ENCODE measurements at regions of chr2 and their contacts with region 1.

Region 1: DNA sequence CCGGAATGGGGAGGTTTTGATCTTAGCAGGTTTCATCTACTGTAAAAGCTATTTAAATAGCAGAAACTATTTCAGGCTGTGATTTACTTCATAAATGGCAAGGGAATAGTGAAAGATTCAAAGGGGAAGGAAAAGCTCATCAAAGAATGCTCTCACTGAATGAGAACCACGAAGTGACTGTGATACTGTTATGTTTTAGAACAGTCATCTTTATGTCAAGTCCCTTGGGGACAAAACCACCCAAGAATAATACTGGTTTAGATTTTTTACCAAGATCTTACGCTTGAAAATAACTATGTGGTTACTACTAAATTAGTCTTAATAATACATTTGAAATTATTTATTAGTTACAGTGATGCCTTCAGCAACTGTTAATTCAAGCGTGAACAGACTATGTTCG is 28.1 kb downstream of the FARSB start:
- DNase-seq: no peak
- ATAC-seq: no peak
- H3K4me3 ChIP-seq: no peak overlapping the region
- H3K27ac ChIP-seq: no peak overlapping the region
- H3K4me1 ChIP-seq: no peaks in the 10 kb centered on the region
- H3K27me3 ChIP-seq: no peaks in the 10 kb centered on the region
- CTCF ChIP-seq: no peak
- EP300 ChIP-seq: no peak
- POLR2A ChIP-seq: no peak
- RAD21 ChIP-seq: no peak

Region 2: GRCh38 chr2:222604749-222605515 is 22.8 kb before region 1 on chr2:
- CTCF ChIA-PET with region 1: no interaction called
- POLR2A ChIA-PET with region 1: no interaction called
- in situ Hi-C with region 1: no loop called
- intact Hi-C with region 1: loop called (anchors 1 kb)
- DNase-seq: no peak
- ATAC-seq: no peak
- H3K4me3 ChIP-seq: no peak overlapping the region
- H3K27ac ChIP-seq: no peak overlapping the region
- H3K4me1 ChIP-seq: no peaks in the 10 kb centered on the region
- H3K27me3 ChIP-seq: no peaks in the 10 kb centered on the region
- CTCF ChIP-seq: no peak
- EP300 ChIP-seq: no peak
- POLR2A ChIP-seq: no peak
- RAD21 ChIP-seq: no peak